Mucosa of descending colon (tissue), 3 donors: ENCODE measurements at regions of chr12 and their contacts with region 1.

Region 1: GRCh38 chr12:3777206-3777809 is 24.4 kb upstream of the CRACR2A start:
- DNase-seq: peak in 1 of 3 donors; percentile 70
- ATAC-seq: peak; percentile 82
- H3K4me3 ChIP-seq: no peak overlapping the region
- H3K4me1 ChIP-seq: no peaks in the 10 kb centered on the region
- CTCF ChIP-seq: peak; percentile 43

Region 2: DNA sequence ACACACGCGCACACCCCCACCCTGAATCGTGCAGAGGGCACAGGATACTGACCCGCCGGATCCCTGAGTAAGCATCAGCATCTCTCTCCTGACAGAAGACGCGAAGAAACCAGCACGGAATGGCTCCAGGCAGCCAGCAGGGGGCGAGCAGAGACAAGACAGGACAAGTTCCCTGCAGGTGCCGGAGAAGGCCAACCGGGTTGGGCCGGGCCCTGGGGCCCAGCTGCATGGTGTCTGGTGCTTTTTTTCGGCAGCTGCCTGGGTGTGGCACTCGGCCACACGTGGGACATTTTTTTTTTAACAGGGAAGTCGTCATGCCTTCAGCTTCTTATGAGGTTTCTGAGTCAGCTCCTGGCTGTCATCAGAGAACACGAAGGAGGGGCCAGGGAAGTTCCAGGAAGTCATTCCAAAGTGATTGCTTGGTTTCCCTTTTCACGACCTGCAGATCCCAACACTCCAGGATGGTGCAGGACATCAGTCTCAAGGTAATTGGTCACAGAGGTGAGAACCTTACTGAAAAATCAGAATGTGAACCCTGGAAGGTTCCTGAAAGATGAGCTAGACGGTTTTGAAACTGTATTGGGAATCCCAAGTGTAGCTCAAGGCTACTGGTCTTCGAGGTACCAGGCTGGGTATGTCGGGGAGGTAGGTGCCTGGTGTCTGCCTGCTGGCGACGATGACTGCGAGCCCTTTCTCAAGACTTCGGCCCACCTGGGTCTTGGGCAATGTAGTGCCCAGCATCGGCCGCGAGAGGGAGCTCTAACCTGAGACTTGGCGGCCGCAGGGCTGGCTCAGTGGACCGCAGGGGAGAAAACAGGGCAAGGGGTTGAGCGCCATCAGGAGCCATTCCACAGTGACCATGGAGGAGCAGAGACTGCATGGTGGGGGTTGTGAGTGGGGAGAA is 477.1 kb before region 1 on chr12:
- intact Hi-C with region 1: loop called in 1 of 2 experiments (anchors 10 kb)
- DNase-seq: peak; percentile 92
- ATAC-seq: peak; percentile 92
- H3K4me3 ChIP-seq: peak overlapping the region; percentile 2
- H3K4me1 ChIP-seq: no peaks in the 10 kb centered on the region
- CTCF ChIP-seq: peak; percentile 93

Region 3: GRCh38 chr12:3658327-3659163 is 118.8 kb before region 1 on chr12:
- intact Hi-C with region 1: loop called (anchors 5 to 10 kb)
- DNase-seq: peak in 2 of 3 donors; percentile 40 to 59
- ATAC-seq: peak; percentile 60
- H3K4me3 ChIP-seq: no peak overlapping the region
- H3K4me1 ChIP-seq: no peaks in the 10 kb centered on the region
- CTCF ChIP-seq: no peak